ENCODE measurements at regions of chr17 and their contacts with region 1.

Region 1: GRCh38 chr17:50802609-50803515 is 32.5 kb upstream of the WFIKKN2 start:
- DNase-seq: no peak
- H3K4me3 ChIP-seq: no peak overlapping the region
- H3K27ac ChIP-seq: no peak overlapping the region
- H3K4me1 ChIP-seq: no peaks in the 10 kb centered on the region
- H3K27me3 ChIP-seq: no peaks in the 10 kb centered on the region

Region 2: GRCh38 chr17:50737118-50737698 is 65.7 kb before region 1 on chr17:
- CTCF ChIA-PET with region 1: no interaction called
- POLR2A ChIA-PET with region 1: no interaction called
- DNase-seq: no peak
- H3K4me3 ChIP-seq: no peak overlapping the region
- H3K27ac ChIP-seq: no peak overlapping the region
- H3K4me1 ChIP-seq: peaks cover 0 to 2% (median 0%) of the 10 kb centered on the region in 4 experiments
- H3K27me3 ChIP-seq: no peaks in the 10 kb centered on the region

Region 3: GRCh38 chr17:50790618-50791017 is 12.2 kb before region 1 on chr17:
- CTCF ChIA-PET with region 1: interaction called, 15 read pairs
- POLR2A ChIA-PET with region 1: interaction called, 3 read pairs
- DNase-seq: peak; percentile 39 to 93 (median 87)
- H3K4me3 ChIP-seq: peak overlapping the region in 1 of 7 experiments; percentile 6
- H3K27ac ChIP-seq: no peak overlapping the region
- H3K4me1 ChIP-seq: peaks cover 0 to 22% (median 12%) of the 10 kb centered on the region in 4 experiments
- H3K27me3 ChIP-seq: no peaks in the 10 kb centered on the region

Measured in common myeloid progenitor, CD34-positive (primary cell).